CD4-positive, alpha-beta T cell (primary cell): ENCODE measurements at regions of chr6 and their contacts with region 1.

Region 1: DNA sequence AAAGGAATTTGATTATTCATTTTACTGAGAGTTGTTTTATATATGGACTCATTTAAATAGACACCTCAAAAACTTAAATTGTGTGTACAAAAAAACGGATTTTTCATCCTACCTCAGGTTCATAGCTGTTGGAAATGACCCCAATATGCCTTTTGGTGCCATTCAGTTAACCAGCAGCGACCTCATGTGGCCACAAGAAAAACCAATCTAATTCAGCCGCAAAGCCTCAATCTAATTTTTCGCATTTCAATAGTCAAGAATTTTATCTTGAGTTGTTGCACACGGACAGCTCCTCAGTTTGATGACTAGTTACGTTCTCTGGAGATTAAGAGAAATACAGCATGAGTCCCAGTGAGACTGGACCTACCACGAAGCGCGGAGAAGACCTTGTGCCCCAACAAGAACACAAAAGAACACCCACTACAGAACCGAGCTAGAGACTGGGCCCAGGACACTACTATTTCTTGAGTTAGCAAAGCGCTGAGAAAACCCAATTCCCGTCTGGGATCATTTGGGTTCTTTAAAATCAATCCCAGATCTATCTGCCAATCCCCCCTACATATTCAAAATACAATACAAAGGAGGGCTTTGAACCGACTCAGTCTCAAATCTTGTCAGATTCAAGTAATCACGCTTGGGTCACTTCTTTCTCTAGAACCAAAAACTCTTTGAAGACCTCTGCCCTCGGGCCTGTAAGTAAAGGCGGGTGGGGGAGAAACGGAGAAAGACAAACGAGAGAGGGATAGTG is 1.1 kb downstream of the TCP11 start:
- DNase-seq: peak; percentile 8 to 80 (median 26)
- ATAC-seq: no peak
- H3K4me3 ChIP-seq: no peak overlapping the region
- H3K4me3 Mint-ChIP-seq: peak overlapping the region; percentile 32
- H3K27ac ChIP-seq: no peak overlapping the region
- H3K27ac Mint-ChIP-seq: no peak overlapping the region
- H3K4me1 ChIP-seq: peaks cover 16% of the 10 kb centered on the region
- H3K4me1 Mint-ChIP-seq: peaks cover 11% of the 10 kb centered on the region
- H3K27me3 ChIP-seq: peaks cover 11% of the 10 kb centered on the region in 2 experiments
- H3K27me3 Mint-ChIP-seq: peaks cover 21% of the 10 kb centered on the region
- CTCF ChIP-seq: peak; percentile 85

Region 2: GRCh38 chr6:35152067-35152707 is 12.1 kb after region 1 on chr6:
- CTCF ChIA-PET with region 1: interaction called, 10 read pairs
- POLR2A ChIA-PET with region 1: no interaction called
- intact Hi-C with region 1: no loop called
- DNase-seq: no peak
- ATAC-seq: no peak
- H3K4me3 ChIP-seq: no peak overlapping the region
- H3K4me3 Mint-ChIP-seq: no peak overlapping the region
- H3K27ac ChIP-seq: no peak overlapping the region
- H3K27ac Mint-ChIP-seq: no peak overlapping the region
- H3K4me1 ChIP-seq: no peaks in the 10 kb centered on the region
- H3K4me1 Mint-ChIP-seq: no peaks in the 10 kb centered on the region
- H3K27me3 ChIP-seq: no peaks in the 10 kb centered on the region
- H3K27me3 Mint-ChIP-seq: peaks cover 6% of the 10 kb centered on the region
- CTCF ChIP-seq: no peak